OCI-LY7 (cell line): ENCODE measurements at regions of chr7 and their contacts with region 1.

Region 1: DNA sequence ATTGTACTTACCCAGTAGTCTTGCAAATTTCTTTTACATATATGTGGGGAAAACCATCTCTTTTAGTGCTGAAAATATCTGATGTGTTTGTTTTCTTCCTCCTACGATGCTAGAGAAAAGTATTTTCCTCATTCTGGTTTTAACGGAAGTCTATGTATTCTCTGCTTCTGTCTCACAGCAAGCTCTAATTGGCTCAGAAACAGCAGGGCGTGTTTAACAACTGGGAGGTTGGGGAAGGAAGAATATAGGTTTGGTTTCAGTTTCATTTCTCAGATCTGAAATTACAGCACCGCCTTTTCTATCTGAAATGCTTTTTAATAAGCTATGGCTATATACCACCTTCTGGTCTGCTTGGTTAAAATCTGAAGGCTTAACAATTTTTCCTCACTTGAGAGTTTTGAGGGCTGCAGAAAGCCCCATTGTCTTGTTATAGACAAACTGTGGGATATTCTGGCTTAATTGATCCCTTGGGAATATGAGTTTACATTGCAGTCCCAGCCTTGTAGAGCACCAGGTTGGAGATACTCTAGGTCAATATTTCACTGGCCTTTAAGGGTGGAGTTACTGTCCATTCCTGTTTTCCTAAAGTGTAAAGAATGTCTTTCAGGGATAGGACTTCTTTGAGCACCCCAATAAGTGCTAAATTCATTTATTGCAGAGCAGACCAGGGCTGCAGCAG is at the start of gene SAMD9:
- DNase-seq: peak; percentile 90
- H3K4me3 ChIP-seq: peak within 1 kb of the TSS; percentile 67
- H3K27ac ChIP-seq: peak within 1 kb of the TSS; percentile 34
- H3K4me1 ChIP-seq: peaks cover 20% of the 10 kb centered on the region
- CTCF ChIP-seq: no peak
- total RNA-seq, gene SAMD9: 6.1 and 6.3 TPM in 2 replicates

Region 2: GRCh38 chr7:93133005-93133404 is 15.0 kb after region 1 on chr7:
- CTCF ChIA-PET with region 1: no interaction called
- POLR2A ChIA-PET with region 1: interaction called, 14 read pairs
- intact Hi-C with region 1: no loop called
- DNase-seq: no peak
- H3K4me3 ChIP-seq: no peak overlapping the region
- H3K27ac ChIP-seq: no peak overlapping the region
- H3K4me1 ChIP-seq: no peaks in the 10 kb centered on the region
- CTCF ChIP-seq: no peak